ENCODE measurements at regions of chr17 and their contacts with region 1.

Region 1: GRCh38 chr17:76384222-76384986 is at the start of gene SPHK1:
- DNase-seq: peak; percentile 73
- ATAC-seq: peak; percentile 35
- H3K4me3 Mint-ChIP-seq: peak within 1 kb of the TSS; percentile 81
- H3K27ac Mint-ChIP-seq: no peak within 1 kb of the TSS
- H3K4me1 Mint-ChIP-seq: peaks cover 18% of the 10 kb centered on the region
- H3K27me3 Mint-ChIP-seq: peaks cover 49% of the 10 kb centered on the region
- CTCF ChIP-seq: no peak
- total RNA-seq, gene SPHK1: 2.5 to 2.9 TPM (median 2.8 TPM) in 3 replicates

Region 2: GRCh38 chr17:76292567-76292966 is 91.8 kb before region 1 on chr17:
- CTCF ChIA-PET with region 1: no interaction called
- POLR2A ChIA-PET with region 1: no interaction called
- DNase-seq: no peak
- ATAC-seq: no peak
- H3K4me3 Mint-ChIP-seq: no peak overlapping the region
- H3K27ac Mint-ChIP-seq: no peak overlapping the region
- H3K4me1 Mint-ChIP-seq: no peaks in the 10 kb centered on the region
- H3K27me3 Mint-ChIP-seq: no peaks in the 10 kb centered on the region
- CTCF ChIP-seq: no peak

Region 3: DNA sequence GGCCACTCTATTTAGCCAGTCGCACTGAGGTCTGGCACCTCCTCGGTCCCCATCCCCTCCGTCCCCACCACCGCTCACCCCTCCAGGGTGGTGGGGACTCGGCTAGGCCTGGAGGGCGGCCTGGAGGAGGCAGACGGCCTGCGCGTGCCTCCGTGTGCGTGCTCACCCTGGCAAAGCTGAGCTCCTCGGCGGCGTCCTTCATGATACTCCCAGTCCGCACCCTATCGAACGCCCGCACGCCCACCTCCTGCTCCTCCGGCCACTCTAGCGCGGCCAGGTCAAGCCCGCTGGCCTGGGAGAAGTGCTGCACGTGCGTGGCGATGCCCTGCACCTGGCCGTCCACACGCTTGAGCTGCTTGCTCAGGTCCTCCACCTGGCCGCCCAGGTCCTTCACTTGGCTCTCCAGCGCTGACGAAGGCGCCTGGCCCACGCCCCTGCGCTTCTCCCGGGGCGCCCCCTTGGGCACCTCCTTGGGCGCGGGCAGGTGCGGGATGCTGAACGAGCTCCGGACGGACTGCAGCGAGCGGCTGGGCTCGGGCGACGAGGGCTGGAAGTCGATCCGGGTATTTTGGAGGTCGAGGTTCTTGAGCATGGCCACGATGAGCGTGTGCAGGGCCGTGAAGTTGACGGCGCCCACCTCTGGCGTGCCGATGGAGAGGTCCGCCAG is 77.0 kb before region 1 on chr17:
- CTCF ChIA-PET with region 1: interaction called, 16 read pairs
- POLR2A ChIA-PET with region 1: no interaction called
- DNase-seq: no peak
- ATAC-seq: no peak
- H3K4me3 Mint-ChIP-seq: no peak overlapping the region
- H3K27ac Mint-ChIP-seq: no peak overlapping the region
- H3K4me1 Mint-ChIP-seq: no peaks in the 10 kb centered on the region
- H3K27me3 Mint-ChIP-seq: no peaks in the 10 kb centered on the region
- CTCF ChIP-seq: no peak

Region 4: DNA sequence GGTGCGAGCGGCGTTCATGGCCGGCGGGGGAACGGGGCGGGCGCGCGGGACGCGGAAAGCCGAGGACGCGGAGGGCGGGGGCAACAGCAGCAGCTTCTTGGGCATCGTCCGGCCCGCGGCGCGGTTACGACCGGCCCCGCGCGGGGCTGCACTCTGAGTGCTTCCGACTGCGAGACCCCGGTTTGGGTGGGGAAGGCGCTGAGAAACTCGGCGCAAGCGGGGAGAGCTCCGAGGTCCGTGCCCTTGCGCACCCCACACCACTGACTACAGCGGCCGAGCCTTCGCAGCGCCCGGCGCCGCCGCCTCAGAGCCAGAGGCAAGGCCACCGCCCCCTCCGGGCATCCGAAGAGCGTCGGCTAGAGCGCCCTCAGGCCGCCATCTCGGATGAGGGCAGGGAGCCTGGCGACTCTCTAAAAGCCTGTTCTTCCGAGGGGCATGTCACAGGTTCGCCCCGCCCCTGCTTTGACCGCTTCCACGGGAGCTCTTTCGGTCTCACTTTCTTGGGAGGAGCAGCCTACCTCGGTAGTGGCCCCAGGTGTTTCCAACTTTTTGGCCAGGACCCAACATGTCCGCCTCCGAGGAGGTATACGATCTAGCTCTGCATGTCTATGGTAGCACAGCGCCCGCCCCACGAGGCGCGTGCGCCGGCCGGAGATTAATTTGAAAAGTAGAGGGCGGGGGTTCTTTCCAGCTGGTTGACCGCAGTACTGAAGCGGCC is 30.6 kb before region 1 on chr17 and contains the start of gene PRPSAP1:
- CTCF ChIA-PET with region 1: interaction called, 28 read pairs
- POLR2A ChIA-PET with region 1: interaction called, 10 read pairs
- DNase-seq: peak; percentile 86
- ATAC-seq: peak; percentile 94
- H3K4me3 Mint-ChIP-seq: peak within 1 kb of the TSS; percentile 95
- H3K27ac Mint-ChIP-seq: peak within 1 kb of the TSS; percentile 100
- H3K4me1 Mint-ChIP-seq: peaks cover 27% of the 10 kb centered on the region
- H3K27me3 Mint-ChIP-seq: no peaks in the 10 kb centered on the region
- CTCF ChIP-seq: no peak
- total RNA-seq, gene PRPSAP1: 50.0 to 56.5 TPM (median 52.3 TPM) in 3 replicates

Region 5: DNA sequence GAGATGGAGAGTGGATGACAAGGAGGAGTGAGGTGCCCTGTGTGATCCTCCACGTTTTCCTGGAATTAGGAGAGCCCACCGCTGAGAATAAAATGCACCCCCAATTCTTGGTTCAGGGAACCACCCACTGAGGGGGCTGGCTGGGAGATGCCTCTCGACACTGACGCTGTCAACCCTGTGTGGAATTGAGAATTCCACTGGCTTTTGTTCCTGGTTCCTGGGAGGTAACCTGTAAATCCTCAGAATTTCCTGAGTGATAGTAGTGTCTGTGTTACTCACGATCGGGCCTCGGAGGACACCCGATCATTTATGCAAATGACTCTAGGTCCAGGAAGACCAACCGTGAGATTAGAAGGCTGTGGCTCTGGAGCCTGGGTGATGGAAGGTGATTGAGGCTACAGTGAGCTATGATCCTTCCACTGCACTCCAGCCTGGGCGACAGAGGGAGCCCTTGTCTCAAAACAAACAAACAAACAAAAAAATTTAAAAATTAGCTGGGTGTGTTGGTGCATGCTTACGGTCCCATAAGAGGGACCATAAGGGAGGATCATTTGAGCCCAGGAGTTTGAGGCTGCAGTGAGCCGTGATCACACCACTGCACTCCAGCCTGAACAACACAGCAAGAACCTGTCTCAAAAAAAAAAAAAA is 19.0 kb before region 1 on chr17:
- CTCF ChIA-PET with region 1: interaction called, 102 read pairs
- POLR2A ChIA-PET with region 1: interaction called, 4 read pairs
- DNase-seq: no peak
- ATAC-seq: peak; percentile 52
- H3K4me3 Mint-ChIP-seq: no peak overlapping the region
- H3K27ac Mint-ChIP-seq: 0 out of 2 replicates have a peak overlapping the region, but pooled peaks have one; percentile 25
- H3K4me1 Mint-ChIP-seq: peaks cover 26% of the 10 kb centered on the region
- H3K27me3 Mint-ChIP-seq: no peaks in the 10 kb centered on the region; the same call in 1 of the 2 replicates
- CTCF ChIP-seq: no peak

Region 6: DNA sequence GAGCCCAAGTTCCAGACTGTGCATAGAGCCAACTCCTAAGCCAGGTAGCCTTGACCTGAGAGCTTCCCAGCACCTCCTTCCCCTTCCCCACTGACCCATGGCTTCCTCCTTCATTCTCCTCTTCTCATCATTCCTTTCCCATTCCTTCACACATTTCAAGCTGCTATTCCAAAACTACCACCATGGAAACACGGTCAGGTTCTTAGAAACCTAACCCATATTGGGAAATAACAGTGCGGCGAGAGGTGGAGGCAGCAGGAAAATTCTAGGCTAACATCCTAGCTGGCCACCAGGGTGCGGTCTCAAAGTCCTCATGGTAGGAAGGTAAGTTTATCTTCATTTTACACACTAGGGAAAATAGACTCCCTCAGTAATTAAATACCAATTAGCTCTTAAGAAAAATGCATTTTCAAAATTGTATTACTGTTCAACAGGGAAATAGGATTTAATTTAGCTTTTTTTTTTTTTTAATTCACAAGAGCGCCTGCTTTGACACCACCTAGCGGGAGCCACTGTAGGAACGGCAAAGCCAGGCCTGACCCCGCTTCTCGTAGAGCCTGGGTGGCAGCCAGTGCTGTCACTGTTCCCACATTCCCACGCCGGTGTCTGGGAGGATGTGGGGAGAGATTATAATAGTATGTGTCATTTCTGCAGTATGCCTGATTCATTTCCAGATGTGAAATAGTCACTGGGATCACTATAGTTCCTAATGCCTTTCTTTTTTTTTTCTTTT is 14.0 kb before region 1 on chr17:
- CTCF ChIA-PET with region 1: interaction called, 102 read pairs
- POLR2A ChIA-PET with region 1: interaction called, 4 read pairs
- DNase-seq: no peak
- ATAC-seq: peak; percentile 13; the same call in 1 of the 2 replicates
- H3K4me3 Mint-ChIP-seq: no peak overlapping the region
- H3K27ac Mint-ChIP-seq: peak overlapping the region; percentile 7; the same call in 1 of the 2 replicates
- H3K4me1 Mint-ChIP-seq: peaks cover 22% of the 10 kb centered on the region
- H3K27me3 Mint-ChIP-seq: no peaks in the 10 kb centered on the region; the same call in 1 of the 2 replicates
- CTCF ChIP-seq: no peak